Endothelial cell of umbilical vein (primary cell): ENCODE measurements at regions of chr1 and their contacts with region 1.

Region 1: GRCh38 chr1:186680245-186681061 is at the start of gene PTGS2:
- DNase-seq: peak; percentile 96
- H3K4me3 ChIP-seq: peak within 1 kb of the TSS; percentile 80 to 99 (median 87)
- H3K27ac ChIP-seq: peak within 1 kb of the TSS; percentile 91
- H3K4me1 ChIP-seq: peaks cover 26% of the 10 kb centered on the region
- H3K27me3 ChIP-seq: no peaks in the 10 kb centered on the region
- CTCF ChIP-seq: peak; percentile 51 to 77
- POLR2A ChIP-seq: peak; percentile 77
- total RNA-seq, gene PTGS2: 21.6 and 24.1 TPM in 2 replicates

Region 2: GRCh38 chr1:186404454-186405051 is 275.9 kb before region 1 on chr1:
- CTCF ChIA-PET with region 1: interaction called, 19 read pairs
- POLR2A ChIA-PET with region 1: no interaction called
- dilution Hi-C with region 1: no loop called
- intact Hi-C with region 1: loop called (anchors 1 kb)
- DNase-seq: peak; percentile 89
- H3K4me3 ChIP-seq: no peak overlapping the region
- H3K27ac ChIP-seq: peak overlapping the region; percentile 89
- H3K4me1 ChIP-seq: peaks cover 6% of the 10 kb centered on the region
- H3K27me3 ChIP-seq: no peaks in the 10 kb centered on the region
- CTCF ChIP-seq: peak; percentile 47 to 66
- POLR2A ChIP-seq: no peak

Region 3: DNA sequence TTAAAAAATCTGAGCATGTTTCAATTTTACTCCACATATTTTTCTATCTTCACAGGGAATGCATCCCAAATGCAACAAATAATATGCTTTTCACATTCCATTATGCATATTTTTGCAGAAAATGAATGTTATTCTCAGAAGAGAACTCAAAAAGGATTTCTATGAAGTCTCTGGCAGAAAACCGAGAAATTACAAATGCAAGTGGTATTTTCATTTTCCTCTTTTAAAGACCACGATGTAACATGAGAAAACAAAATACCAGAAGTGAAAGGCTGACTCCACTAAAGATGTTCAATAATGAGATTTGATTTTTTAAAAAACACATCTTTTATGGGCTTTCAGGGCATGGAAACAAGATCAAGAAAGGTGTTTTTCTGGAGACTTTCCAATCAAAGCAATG is 214.5 kb before region 1 on chr1:
- CTCF ChIA-PET with region 1: no interaction called
- POLR2A ChIA-PET with region 1: no interaction called
- dilution Hi-C with region 1: no loop called
- intact Hi-C with region 1: no loop called
- DNase-seq: no peak
- H3K4me3 ChIP-seq: no peak overlapping the region
- H3K27ac ChIP-seq: no peak overlapping the region
- H3K4me1 ChIP-seq: no peaks in the 10 kb centered on the region
- H3K27me3 ChIP-seq: no peaks in the 10 kb centered on the region
- CTCF ChIP-seq: no peak
- POLR2A ChIP-seq: no peak

Region 4: DNA sequence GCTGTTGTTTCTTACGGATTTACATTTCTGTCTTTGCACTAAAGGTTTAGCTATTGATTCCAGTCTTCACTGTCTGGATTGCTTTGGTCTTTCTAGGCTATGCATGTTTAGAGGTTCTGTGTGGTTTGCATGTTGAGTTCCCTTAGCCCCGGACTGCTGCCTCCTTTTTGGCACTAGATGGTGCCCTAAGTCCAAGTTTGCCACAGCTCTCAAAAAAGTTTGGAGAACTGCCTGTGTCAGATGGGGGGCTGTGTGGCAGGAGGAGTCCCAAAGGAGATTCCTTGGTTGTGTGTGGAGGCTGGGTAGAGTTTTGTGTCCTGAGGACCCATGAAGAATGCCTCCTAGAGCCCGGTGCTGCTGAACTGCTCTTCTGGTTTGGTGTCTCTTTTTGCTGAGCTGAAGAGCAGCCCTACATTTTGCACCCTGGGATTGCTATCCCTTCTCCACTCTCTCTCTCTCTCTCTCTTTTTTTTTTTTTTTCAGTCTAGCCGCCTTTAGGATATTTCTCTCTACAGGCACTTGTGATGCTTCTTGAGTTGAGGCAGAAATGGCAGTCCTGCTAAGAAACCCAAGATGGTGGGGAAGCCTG is 74.6 kb before region 1 on chr1:
- CTCF ChIA-PET with region 1: interaction called, 51 read pairs
- POLR2A ChIA-PET with region 1: interaction called, 3 read pairs
- dilution Hi-C with region 1: no loop called
- intact Hi-C with region 1: loop called (anchors 1 kb)
- DNase-seq: peak; percentile 75
- H3K4me3 ChIP-seq: no peak overlapping the region
- H3K27ac ChIP-seq: no peak overlapping the region
- H3K4me1 ChIP-seq: no peaks in the 10 kb centered on the region
- H3K27me3 ChIP-seq: no peaks in the 10 kb centered on the region
- CTCF ChIP-seq: peak; percentile 75 to 83
- POLR2A ChIP-seq: no peak

Region 5: GRCh38 chr1:186722711-186723309 is 42.4 kb after region 1 on chr1:
- CTCF ChIA-PET with region 1: interaction called, 15 read pairs
- POLR2A ChIA-PET with region 1: no interaction called
- dilution Hi-C with region 1: no loop called
- intact Hi-C with region 1: no loop called
- DNase-seq: peak; percentile 52
- H3K4me3 ChIP-seq: no peak overlapping the region
- H3K27ac ChIP-seq: no peak overlapping the region
- H3K4me1 ChIP-seq: no peaks in the 10 kb centered on the region
- H3K27me3 ChIP-seq: no peaks in the 10 kb centered on the region
- CTCF ChIP-seq: peak; percentile 55 to 56
- POLR2A ChIP-seq: no peak

Region 6: GRCh38 chr1:186828611-186829454 is 148.4 kb after region 1 on chr1 and contains the start of gene PLA2G4A:
- CTCF ChIA-PET with region 1: interaction called, 3 read pairs
- POLR2A ChIA-PET with region 1: no interaction called
- dilution Hi-C with region 1: no loop called
- intact Hi-C with region 1: loop called (anchors 2 kb)
- DNase-seq: peak; percentile 87
- H3K4me3 ChIP-seq: peak within 1 kb of the TSS; percentile 67 to 100 (median 98)
- H3K27ac ChIP-seq: peak within 1 kb of the TSS; percentile 75
- H3K4me1 ChIP-seq: peaks cover 7% of the 10 kb centered on the region
- H3K27me3 ChIP-seq: no peaks in the 10 kb centered on the region
- CTCF ChIP-seq: no peak
- POLR2A ChIP-seq: no peak
- total RNA-seq, gene PLA2G4A: 10.6 and 13.3 TPM in 2 replicates

Region 7: GRCh38 chr1:186943891-186944686 is 263.6 kb after region 1 on chr1:
- CTCF ChIA-PET with region 1: interaction called, 3 read pairs
- POLR2A ChIA-PET with region 1: interaction called, 3 read pairs
- dilution Hi-C with region 1: no loop called
- intact Hi-C with region 1: loop called (anchors 1 kb)
- DNase-seq: peak; percentile 94
- H3K4me3 ChIP-seq: no peak overlapping the region
- H3K27ac ChIP-seq: peak overlapping the region; percentile 99
- H3K4me1 ChIP-seq: peaks cover 59% of the 10 kb centered on the region
- H3K27me3 ChIP-seq: no peaks in the 10 kb centered on the region
- CTCF ChIP-seq: no peak
- POLR2A ChIP-seq: peak; percentile 67

Region 8: DNA sequence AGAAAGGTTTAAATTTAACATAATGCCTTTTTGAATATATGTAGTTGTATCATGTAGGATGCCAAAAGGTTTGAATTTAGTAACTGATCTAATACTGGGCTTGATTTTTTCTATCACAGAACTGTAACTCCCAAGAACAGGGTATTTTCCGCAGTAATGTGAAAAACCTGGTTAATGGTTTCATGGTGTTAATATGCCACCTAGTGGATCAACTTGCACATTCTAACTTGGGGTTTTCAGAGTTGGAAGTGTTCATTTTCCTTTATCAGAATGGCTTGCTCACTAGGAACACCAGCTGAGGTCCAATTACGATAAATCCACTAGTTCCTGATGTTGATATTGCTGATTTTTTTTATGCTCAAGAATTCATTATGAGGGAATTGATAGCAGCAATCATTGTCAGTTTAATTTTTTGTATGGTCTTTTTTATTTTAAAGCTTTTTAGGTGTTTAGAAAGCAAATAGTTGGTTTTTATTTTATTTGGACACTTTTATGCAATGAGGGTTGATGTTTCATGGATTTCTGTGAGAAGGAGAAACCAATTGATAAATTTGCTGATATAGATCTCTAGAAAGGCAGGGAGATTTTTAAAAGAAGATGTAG is 305.5 kb after region 1 on chr1:
- CTCF ChIA-PET with region 1: interaction called, 21 read pairs
- POLR2A ChIA-PET with region 1: no interaction called
- dilution Hi-C with region 1: no loop called
- intact Hi-C with region 1: loop called (anchors 1 kb)
- DNase-seq: peak; percentile 90
- H3K4me3 ChIP-seq: no peak overlapping the region
- H3K27ac ChIP-seq: peak overlapping the region; percentile 76
- H3K4me1 ChIP-seq: peaks cover 16% of the 10 kb centered on the region
- H3K27me3 ChIP-seq: no peaks in the 10 kb centered on the region
- CTCF ChIP-seq: peak; percentile 45 to 48
- POLR2A ChIP-seq: no peak

Region 9: DNA sequence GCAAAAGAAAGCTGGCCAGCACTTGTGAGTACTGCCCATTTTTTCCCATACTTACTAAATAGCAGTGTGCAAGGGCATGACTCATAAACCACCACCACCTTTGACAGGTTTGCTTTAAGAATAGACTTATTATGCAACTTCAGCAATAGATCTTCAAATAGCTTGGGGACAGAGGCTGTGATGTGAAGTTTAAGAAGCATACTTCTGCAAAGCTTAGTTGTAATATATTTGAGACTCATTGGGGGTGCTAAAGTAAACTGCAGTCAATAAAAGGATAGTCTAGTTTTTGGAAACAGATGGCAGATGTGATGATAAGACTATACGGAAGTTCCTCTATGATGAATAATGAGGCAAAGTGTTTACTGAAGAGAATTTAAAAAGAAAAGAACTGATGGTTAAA is 358.3 kb after region 1 on chr1:
- CTCF ChIA-PET with region 1: no interaction called
- POLR2A ChIA-PET with region 1: no interaction called
- dilution Hi-C with region 1: no loop called
- intact Hi-C with region 1: no loop called
- DNase-seq: peak; percentile 17
- H3K4me3 ChIP-seq: no peak overlapping the region
- H3K27ac ChIP-seq: no peak overlapping the region
- H3K4me1 ChIP-seq: peaks cover 2% of the 10 kb centered on the region
- H3K27me3 ChIP-seq: no peaks in the 10 kb centered on the region
- CTCF ChIP-seq: no peak
- POLR2A ChIP-seq: no peak